Activated CD4-positive, alpha-beta memory T cell treated with anti-CD3 and anti-CD28 coated beads for 36 hours (primary cell): ENCODE measurements at regions of chr14 and their contacts with region 1.

Region 1: DNA sequence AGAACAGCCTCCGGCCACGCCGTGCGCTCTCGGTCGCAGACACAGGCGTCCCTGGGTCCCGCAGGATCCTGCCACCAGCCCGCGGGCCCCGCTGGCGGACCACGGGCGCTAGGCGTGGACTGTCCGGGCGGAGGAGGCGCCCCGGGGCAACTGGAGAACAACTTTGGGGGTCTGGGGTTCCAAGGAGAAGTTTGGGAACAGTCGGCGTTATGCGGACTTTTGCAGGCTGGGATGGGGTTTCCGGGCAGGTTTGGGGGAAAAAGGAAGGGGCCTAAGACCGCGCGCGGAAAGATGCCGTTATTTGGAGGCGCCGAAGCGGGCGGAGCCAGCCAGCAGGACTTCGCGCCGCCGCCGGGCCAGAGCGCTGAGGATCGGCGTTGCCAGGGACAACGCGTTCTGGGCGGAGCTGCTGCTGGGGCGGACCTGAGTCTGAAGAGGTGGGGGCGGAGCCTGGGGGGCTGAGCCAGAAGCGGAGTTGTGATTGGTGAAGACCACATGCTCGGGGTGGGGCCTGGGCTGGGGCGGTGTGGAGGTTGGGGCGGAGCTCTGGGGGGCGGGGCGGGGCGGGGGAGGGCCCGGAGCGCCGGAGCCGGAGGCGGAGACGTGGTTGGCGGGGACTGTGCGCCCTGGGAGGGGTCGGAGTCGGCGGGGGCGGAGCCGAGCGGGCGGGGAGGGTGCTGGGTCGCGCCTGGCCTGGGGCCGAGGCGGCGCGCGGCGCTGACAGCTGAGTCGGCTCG is at the start of gene CYP46A1:
- DNase-seq: peak; percentile 100
- H3K4me3 Mint-ChIP-seq: peak within 1 kb of the TSS; percentile 84
- H3K27ac Mint-ChIP-seq: peak within 1 kb of the TSS; percentile 71
- H3K4me1 Mint-ChIP-seq: peaks cover 3% of the 10 kb centered on the region
- H3K27me3 Mint-ChIP-seq: peaks cover 5% of the 10 kb centered on the region
- total RNA-seq, gene CYP46A1: 0.19 to 0.21 TPM

Region 2: GRCh38 chr14:99518441-99519346 is 165.1 kb before region 1 on chr14:
- CTCF ChIA-PET with region 1: interaction called, 4 read pairs
- POLR2A ChIA-PET with region 1: no interaction called
- intact Hi-C with region 1: loop called (anchors 5 kb)
- DNase-seq: peak; percentile 88
- H3K4me3 Mint-ChIP-seq: no peak overlapping the region
- H3K27ac Mint-ChIP-seq: no peak overlapping the region
- H3K4me1 Mint-ChIP-seq: no peaks in the 10 kb centered on the region
- H3K27me3 Mint-ChIP-seq: no peaks in the 10 kb centered on the region

Region 3: GRCh38 chr14:99604283-99604765 is 79.5 kb before region 1 on chr14:
- CTCF ChIA-PET with region 1: interaction called, 6 read pairs
- POLR2A ChIA-PET with region 1: interaction called, 8 read pairs
- intact Hi-C with region 1: loop called (anchors 2 kb)
- DNase-seq: peak; percentile 95
- H3K4me3 Mint-ChIP-seq: peak overlapping the region; percentile 90
- H3K27ac Mint-ChIP-seq: peak overlapping the region; percentile 79
- H3K4me1 Mint-ChIP-seq: peaks cover 26% of the 10 kb centered on the region
- H3K27me3 Mint-ChIP-seq: no peaks in the 10 kb centered on the region

Region 4: DNA sequence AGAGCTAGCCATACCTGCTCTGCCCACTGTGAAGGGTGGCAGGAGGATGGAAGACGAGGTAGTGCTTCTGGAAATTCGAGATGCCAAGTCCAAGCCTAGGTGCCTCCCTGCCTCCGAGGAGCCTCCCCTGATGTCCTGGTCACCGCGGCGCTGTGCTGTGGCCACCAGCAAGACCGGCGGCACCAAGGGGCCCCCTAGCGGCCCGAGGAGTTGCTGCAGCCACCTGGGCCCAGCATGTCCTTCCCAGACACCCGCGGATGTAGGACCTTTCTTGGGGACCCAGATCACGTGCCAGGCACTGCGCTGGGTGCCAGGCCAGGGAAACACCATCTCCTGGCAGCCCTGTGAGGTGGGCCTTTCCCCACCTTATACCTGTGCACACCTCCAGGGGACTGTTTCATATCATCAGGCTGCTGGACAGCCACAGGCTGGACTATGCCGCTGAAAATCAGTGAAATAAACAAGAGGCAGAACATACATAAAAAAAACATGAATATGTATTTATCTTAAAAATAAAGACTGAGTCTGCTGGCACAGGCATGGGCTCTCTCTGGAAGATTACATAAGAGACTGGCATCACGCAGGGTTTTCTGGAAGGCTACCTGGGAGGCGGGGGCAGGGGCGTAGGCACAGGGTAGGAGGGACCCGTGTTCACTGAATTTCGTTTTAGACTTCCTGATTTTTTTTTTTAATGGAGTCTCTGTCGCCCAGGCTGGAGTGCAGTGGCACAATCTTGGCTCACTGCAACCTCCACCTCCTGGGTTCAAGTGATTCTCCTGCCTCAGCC is 54.8 kb before region 1 on chr14:
- CTCF ChIA-PET with region 1: no interaction called
- POLR2A ChIA-PET with region 1: no interaction called
- intact Hi-C with region 1: no loop called
- DNase-seq: peak; percentile 77
- H3K4me3 Mint-ChIP-seq: no peak overlapping the region
- H3K27ac Mint-ChIP-seq: no peak overlapping the region
- H3K4me1 Mint-ChIP-seq: peaks cover 5% of the 10 kb centered on the region
- H3K27me3 Mint-ChIP-seq: peaks cover 13% of the 10 kb centered on the region

Region 5: DNA sequence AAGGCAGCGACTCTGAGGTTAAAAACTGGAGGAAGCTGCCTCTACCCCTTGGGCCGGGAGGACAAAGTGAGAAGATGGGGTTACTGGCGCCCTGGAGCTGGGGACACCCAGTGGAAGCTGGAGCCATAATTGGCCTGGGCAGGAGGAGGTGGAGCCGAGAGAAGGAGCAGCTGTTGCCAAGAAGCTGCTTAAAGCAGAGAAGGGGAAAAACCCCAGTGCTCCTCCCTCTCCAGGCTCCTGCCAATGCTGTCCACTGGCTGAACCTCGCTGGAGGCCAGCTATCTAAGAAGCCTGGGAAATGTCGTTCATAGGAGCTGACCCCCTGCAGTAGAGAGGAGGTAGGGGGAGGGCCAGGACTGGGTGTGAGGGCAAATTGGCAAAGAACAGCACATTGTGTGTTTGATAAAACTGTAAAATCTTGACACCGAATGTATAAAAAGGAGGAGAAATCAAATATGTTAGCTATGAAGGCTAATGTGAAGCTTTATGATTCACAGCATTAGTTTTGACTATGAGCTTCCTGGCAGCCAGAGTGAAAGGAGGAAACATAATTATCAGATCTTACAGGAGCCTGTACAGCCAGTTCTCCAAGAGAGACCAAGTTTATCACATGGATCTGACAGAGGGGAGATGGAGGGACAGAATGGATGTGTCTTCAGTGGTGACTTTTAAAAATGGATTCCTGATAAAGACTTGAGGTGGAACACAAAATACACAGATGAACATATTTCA is 29.4 kb before region 1 on chr14:
- CTCF ChIA-PET with region 1: no interaction called
- POLR2A ChIA-PET with region 1: no interaction called
- intact Hi-C with region 1: no loop called
- DNase-seq: no peak
- H3K4me3 Mint-ChIP-seq: no peak overlapping the region
- H3K27ac Mint-ChIP-seq: no peak overlapping the region
- H3K4me1 Mint-ChIP-seq: no peaks in the 10 kb centered on the region
- H3K27me3 Mint-ChIP-seq: peaks cover 34% of the 10 kb centered on the region

Region 6: GRCh38 chr14:99696929-99697328 is 13.1 kb after region 1 on chr14:
- CTCF ChIA-PET with region 1: interaction called, 12 read pairs
- POLR2A ChIA-PET with region 1: no interaction called
- intact Hi-C with region 1: no loop called
- DNase-seq: no peak
- H3K4me3 Mint-ChIP-seq: no peak overlapping the region
- H3K27ac Mint-ChIP-seq: no peak overlapping the region
- H3K4me1 Mint-ChIP-seq: no peaks in the 10 kb centered on the region
- H3K27me3 Mint-ChIP-seq: peaks cover 2% of the 10 kb centered on the region

Region 7: GRCh38 chr14:99884834-99885648 is 201.3 kb after region 1 on chr14:
- CTCF ChIA-PET with region 1: interaction called, 8 read pairs
- POLR2A ChIA-PET with region 1: no interaction called
- intact Hi-C with region 1: loop called (anchors 1 kb)
- DNase-seq: no peak
- H3K4me3 Mint-ChIP-seq: no peak overlapping the region
- H3K27ac Mint-ChIP-seq: no peak overlapping the region
- H3K4me1 Mint-ChIP-seq: no peaks in the 10 kb centered on the region
- H3K27me3 Mint-ChIP-seq: peaks cover 11% of the 10 kb centered on the region